Activated CD4-positive, alpha-beta T cell treated with anti-CD3 and anti-CD28 coated beads, Interleukin-2, amount 10 ng/mL, durations not matched to agents 24 days and 14 days (primary cell): ENCODE measurements at regions of chr1 and their contacts with region 1.

Region 1: GRCh38 chr1:155934097-155934935 is at the start of gene KHDC4:
- DNase-seq: peak; percentile 98
- H3K4me3 Mint-ChIP-seq: no peak within 1 kb of the TSS
- H3K27ac Mint-ChIP-seq: no peak within 1 kb of the TSS
- H3K4me1 Mint-ChIP-seq: peaks cover 30% of the 10 kb centered on the region
- H3K27me3 Mint-ChIP-seq: no peaks in the 10 kb centered on the region
- total RNA-seq, gene KHDC4: 82.9 and 92.2 TPM in 2 replicates

Region 2: DNA sequence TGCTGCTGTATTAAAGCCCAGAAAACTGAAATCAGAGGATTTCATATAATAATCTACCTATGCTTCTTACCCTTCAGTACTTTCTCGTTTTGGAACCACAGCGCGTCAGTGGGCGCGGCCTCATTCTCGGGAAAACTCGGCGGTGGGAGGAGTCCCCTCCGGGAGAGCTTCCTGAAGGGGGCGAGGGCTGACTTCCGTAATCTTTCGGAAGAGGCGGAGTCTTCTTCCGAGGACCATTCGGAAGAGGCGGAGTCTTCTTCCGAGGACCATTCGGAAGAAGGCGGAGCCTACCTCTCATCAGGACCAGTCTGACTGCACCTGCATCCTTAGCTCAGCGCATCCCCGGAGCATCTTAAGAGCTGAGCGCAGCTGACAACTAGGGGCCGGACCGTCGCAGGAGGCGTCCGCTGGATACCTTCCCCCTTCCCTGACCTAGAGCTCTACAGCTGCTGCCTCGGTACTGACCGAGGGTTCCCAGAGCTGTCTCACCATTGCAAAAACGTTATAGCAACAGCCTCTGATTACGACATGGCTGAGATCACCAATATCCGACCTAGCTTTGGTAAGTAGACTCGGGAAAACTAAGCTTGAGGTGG is 75.0 kb before region 1 on chr1 and contains the start of gene SYT11:
- intact Hi-C with region 1: loop called (anchors 1 kb)
- DNase-seq: peak; percentile 98
- H3K4me3 Mint-ChIP-seq: peak within 1 kb of the TSS; percentile 90
- H3K27ac Mint-ChIP-seq: peak within 1 kb of the TSS; percentile 95
- H3K4me1 Mint-ChIP-seq: peaks cover 36% of the 10 kb centered on the region
- H3K27me3 Mint-ChIP-seq: no peaks in the 10 kb centered on the region
- total RNA-seq, gene SYT11: 17.8 and 18.5 TPM in 2 replicates

Region 3: GRCh38 chr1:155911156-155912055 is 22.9 kb before region 1 on chr1 and contains the start of gene RIT1:
- intact Hi-C with region 1: loop called (anchors 1 kb)
- DNase-seq: peak; percentile 95
- H3K4me3 Mint-ChIP-seq: peak within 1 kb of the TSS; percentile 97
- H3K27ac Mint-ChIP-seq: peak within 1 kb of the TSS; percentile 99
- H3K4me1 Mint-ChIP-seq: peaks cover 21% of the 10 kb centered on the region
- H3K27me3 Mint-ChIP-seq: no peaks in the 10 kb centered on the region
- total RNA-seq, gene RIT1: 17.9 and 21.7 TPM in 2 replicates

Region 4: GRCh38 chr1:155946633-155947219 is 12.4 kb after region 1 on chr1:
- intact Hi-C with region 1: loop called (anchors 1 kb)
- DNase-seq: peak; percentile 55
- H3K4me3 Mint-ChIP-seq: peak overlapping the region; percentile 64
- H3K27ac Mint-ChIP-seq: peak overlapping the region; percentile 93
- H3K4me1 Mint-ChIP-seq: peaks cover 35% of the 10 kb centered on the region
- H3K27me3 Mint-ChIP-seq: no peaks in the 10 kb centered on the region

Region 5: DNA sequence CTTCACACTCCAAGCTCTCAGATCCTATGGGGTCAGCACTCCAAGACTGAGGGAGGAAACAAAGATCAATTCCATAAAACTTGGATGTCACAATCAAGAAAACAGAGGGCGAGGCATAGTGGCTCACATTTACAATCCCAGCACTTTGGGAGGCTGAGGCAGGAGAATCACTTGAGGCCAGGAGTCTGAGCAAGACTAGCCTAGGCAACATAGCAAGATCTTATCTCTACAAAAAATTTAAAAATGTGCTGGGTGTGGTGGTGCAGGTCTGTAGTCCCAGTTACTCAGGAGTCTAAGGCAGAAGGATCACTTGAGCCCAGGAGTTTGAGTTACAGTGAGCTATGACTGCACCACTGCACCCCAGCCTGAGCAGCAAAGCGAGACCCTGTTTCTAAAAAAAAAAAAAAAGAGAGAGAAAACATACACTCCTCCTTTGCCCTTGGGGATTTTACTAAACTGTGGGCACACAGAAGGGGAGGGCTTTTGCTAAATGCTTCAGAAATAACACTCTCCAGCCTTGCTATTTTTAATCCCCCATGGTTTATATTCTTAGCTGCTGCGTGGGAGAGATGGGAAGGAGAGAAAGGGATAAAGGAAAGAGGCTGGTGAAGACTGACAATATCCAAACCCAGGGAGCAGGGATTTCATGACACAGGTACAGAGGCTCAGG is 25.9 kb after region 1 on chr1:
- intact Hi-C with region 1: no loop called
- DNase-seq: no peak
- H3K4me3 Mint-ChIP-seq: no peak overlapping the region
- H3K27ac Mint-ChIP-seq: peak overlapping the region; percentile 66
- H3K4me1 Mint-ChIP-seq: peaks cover 13% of the 10 kb centered on the region
- H3K27me3 Mint-ChIP-seq: no peaks in the 10 kb centered on the region

Region 6: DNA sequence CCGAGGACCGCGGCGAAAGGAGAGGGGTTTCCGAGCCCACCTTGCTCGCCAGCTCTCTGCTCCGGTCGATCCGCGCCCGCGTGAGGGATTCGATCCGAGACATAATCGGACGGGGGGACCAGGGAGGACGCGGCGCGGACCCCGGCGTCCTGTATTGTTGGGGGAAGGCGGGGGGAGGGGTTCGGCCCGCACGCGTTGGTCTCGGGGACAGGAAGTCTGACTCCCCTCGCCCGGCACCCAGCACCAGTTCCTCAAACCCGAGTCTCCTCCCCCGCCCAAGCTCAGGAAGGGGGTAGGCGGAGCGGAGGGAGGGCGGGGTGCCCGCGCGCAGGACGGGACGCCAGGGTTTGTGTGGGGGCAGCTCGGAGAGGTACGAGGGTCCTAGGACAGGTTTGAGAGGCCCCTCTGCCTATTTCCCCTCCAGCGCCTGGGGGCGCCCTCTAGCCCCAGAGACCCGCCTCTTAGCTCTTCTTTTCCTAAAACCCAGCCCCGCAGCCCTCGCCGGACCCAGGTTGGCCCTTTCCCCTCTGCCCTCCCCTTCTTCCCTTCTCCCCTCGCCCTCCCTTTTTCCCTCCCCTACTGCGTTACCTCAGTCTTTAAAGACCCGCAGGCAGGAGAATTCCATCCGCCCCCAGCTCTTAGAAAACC is 44.1 kb after region 1 on chr1 and contains the start of gene ARHGEF2:
- intact Hi-C with region 1: loop called (anchors 1 kb)
- DNase-seq: peak; percentile 94
- H3K4me3 Mint-ChIP-seq: peak within 1 kb of the TSS; percentile 99
- H3K27ac Mint-ChIP-seq: peak within 1 kb of the TSS; percentile 92
- H3K4me1 Mint-ChIP-seq: peaks cover 70% of the 10 kb centered on the region
- H3K27me3 Mint-ChIP-seq: no peaks in the 10 kb centered on the region
- total RNA-seq, gene ARHGEF2: 189 and 198 TPM in 2 replicates

Region 7: GRCh38 chr1:155989242-155990004 is 55.1 kb after region 1 on chr1:
- intact Hi-C with region 1: loop called (anchors 1 kb)
- DNase-seq: peak; percentile 95
- H3K4me3 Mint-ChIP-seq: no peak overlapping the region
- H3K27ac Mint-ChIP-seq: no peak overlapping the region
- H3K4me1 Mint-ChIP-seq: peaks cover 16% of the 10 kb centered on the region
- H3K27me3 Mint-ChIP-seq: no peaks in the 10 kb centered on the region

Region 8: DNA sequence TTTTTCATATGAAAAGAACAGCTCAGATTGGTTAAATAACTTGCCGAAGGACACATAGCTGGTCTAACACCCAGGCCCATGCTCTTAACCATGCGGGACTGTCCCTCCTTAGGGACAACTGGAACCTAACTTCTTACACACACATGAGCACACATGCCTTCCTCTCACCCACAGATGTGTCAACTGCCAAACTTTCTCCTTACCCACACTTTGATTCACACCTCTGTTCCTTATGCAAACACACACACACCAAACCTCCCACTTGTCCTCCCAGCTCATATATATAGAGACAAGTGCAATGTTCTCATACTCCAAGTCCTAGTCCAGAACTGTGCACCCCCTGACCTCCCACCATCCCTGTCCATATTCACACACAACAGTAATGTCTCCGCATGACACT is 130.9 kb after region 1 on chr1:
- intact Hi-C with region 1: loop called (anchors 5 kb)
- DNase-seq: no peak
- H3K4me3 Mint-ChIP-seq: no peak overlapping the region
- H3K27ac Mint-ChIP-seq: peak overlapping the region; percentile 2
- H3K4me1 Mint-ChIP-seq: peaks cover 11% of the 10 kb centered on the region
- H3K27me3 Mint-ChIP-seq: peaks cover 2% of the 10 kb centered on the region